IMR-90 (cell line): ENCODE measurements at regions of chr6 and their contacts with region 1.

Region 1: DNA sequence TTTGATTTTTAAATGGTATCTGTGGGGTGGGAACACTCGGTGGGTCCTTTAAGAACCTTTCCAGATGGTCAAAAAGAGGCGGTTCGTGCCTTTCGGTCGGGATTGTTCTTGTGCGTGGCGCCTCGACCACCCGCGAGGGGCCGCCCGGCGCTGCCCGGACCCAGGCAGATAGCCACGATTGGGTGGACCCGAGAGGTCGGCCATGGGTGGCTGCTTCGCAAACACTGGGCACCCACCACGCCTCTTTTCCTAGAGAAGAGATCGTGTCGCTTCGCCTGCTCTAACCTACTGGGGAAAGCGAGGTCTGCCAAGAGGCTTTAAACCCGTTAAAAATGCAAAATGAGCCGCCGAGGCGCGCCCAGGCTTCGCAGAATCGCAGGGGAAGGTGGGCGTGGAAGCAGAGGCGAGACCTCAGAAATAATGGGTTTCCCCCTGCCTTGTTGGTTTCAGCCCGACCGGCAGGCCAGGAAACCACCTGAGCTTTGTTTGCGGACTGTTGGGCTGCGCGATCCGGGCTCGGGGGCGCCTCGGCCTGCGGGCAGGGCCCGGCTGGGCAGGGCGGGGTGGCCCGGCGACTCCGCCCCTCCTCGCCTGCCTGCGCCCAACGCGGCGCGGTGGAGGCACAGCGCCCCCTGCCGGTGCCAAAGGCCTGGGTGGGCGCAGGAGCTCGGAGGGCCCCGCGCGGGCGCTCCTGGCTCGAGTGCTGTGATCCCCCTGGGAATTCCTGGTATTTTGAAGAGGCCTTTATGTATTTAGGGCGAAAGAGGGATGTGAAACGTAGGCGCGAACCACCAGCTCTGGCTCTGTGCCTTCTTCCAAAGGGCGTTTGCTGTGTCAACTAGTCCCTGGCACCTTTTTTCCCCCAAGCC is 1.6 kb downstream of the MARCKS start:
- DNase-seq: peak; percentile 87
- ATAC-seq: peak; percentile 69
- H3K4me3 ChIP-seq: peak overlapping the region; percentile 95
- H3K27ac ChIP-seq: peak overlapping the region; percentile 96
- H3K4me1 ChIP-seq: no peaks in the 10 kb centered on the region
- H3K27me3 ChIP-seq: no peaks in the 10 kb centered on the region
- CTCF ChIP-seq: peak; percentile 96
- POLR2A ChIP-seq: peak; percentile 71; the same call in 1 of the 2 replicates
- RAD21 ChIP-seq: peak; percentile 95

Region 2: GRCh38 chr6:112649853-112650252 is 1208.9 kb before region 1 on chr6:
- CTCF ChIA-PET with region 1: no interaction called
- POLR2A ChIA-PET with region 1: no interaction called
- dilution Hi-C with region 1: no loop called
- in situ Hi-C with region 1: no loop called
- intact Hi-C with region 1: no loop called
- DNase-seq: no peak
- ATAC-seq: no peak
- H3K4me3 ChIP-seq: no peak overlapping the region
- H3K27ac ChIP-seq: no peak overlapping the region
- H3K4me1 ChIP-seq: no peaks in the 10 kb centered on the region
- H3K27me3 ChIP-seq: no peaks in the 10 kb centered on the region
- CTCF ChIP-seq: no peak
- POLR2A ChIP-seq: no peak
- RAD21 ChIP-seq: no peak

Region 3: GRCh38 chr6:112879920-112880413 is 978.7 kb before region 1 on chr6:
- CTCF ChIA-PET with region 1: interaction called, 4 read pairs
- POLR2A ChIA-PET with region 1: no interaction called
- dilution Hi-C with region 1: no loop called
- in situ Hi-C with region 1: no loop called
- intact Hi-C with region 1: loop called (anchors 2 kb)
- DNase-seq: no peak
- ATAC-seq: no peak
- H3K4me3 ChIP-seq: no peak overlapping the region
- H3K27ac ChIP-seq: no peak overlapping the region
- H3K4me1 ChIP-seq: peaks cover 11% of the 10 kb centered on the region
- H3K27me3 ChIP-seq: no peaks in the 10 kb centered on the region
- CTCF ChIP-seq: no peak
- POLR2A ChIP-seq: no peak
- RAD21 ChIP-seq: no peak

Region 4: DNA sequence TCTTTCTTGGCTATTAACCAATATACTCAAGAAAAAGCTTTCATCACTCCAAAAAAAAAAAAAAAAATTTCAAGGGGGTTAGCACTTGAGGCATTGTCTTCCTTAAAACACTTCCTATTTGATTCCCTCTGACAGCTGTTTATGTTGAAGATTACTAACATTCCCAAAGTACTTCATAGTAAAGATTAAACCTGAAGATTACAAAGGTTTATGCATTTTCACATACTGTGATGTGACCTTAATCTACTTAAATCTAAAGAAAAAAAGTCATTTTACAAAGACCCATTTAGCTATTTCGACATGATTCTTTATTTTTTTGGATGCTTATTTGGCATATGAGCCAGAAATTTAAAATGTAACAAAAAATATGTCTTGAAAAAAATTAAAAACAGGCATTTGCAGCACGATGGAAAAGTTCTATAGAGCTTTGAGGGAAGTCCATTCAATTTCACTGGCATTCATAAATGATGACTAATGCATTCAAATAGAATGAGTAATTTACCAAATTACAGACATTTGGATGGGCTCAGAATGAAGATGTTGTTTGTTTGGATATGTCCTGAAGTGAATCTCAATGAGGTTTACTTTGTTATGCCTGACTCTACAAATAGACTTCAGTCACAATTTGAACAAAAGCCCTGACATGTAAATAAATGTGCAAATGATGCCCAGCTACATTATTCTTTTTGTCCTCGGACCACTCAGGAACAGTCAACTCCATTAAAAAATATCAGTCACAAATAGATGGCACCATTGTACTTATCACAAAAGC is 676.2 kb before region 1 on chr6:
- CTCF ChIA-PET with region 1: interaction called, 8 read pairs
- POLR2A ChIA-PET with region 1: interaction called, 7 read pairs
- dilution Hi-C with region 1: no loop called
- in situ Hi-C with region 1: no loop called
- intact Hi-C with region 1: loop called (anchors 2 kb)
- DNase-seq: peak; percentile 83
- ATAC-seq: peak; percentile 47
- H3K4me3 ChIP-seq: no peak overlapping the region
- H3K27ac ChIP-seq: no peak overlapping the region; the same call in 1 of the 2 replicates
- H3K4me1 ChIP-seq: peaks cover 13% of the 10 kb centered on the region
- H3K27me3 ChIP-seq: no peaks in the 10 kb centered on the region
- CTCF ChIP-seq: no peak
- POLR2A ChIP-seq: no peak
- RAD21 ChIP-seq: no peak

Region 5: DNA sequence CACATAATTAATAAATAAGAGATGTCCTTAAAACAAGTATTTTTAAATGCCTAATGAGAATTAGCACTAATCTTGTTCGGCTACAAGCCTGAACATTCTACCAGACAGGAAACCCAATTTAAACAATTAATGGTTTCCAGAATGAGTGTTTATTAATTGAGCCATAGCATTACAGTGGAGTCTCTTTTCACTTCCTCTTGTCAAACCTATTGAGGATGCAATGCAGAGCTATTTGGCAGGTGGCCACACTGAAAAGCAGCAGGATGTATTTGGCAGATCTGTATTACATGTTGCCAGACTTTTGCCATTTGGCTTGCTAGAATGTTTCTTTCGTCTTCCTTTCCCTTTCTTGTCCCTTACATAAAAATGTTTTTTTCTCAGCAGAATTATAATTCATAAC is 476.8 kb before region 1 on chr6:
- CTCF ChIA-PET with region 1: no interaction called
- POLR2A ChIA-PET with region 1: no interaction called
- dilution Hi-C with region 1: no loop called
- in situ Hi-C with region 1: no loop called
- intact Hi-C with region 1: loop called (anchors 2 kb)
- DNase-seq: peak; percentile 75
- ATAC-seq: no peak
- H3K4me3 ChIP-seq: no peak overlapping the region
- H3K27ac ChIP-seq: no peak overlapping the region; the same call in 1 of the 2 replicates
- H3K4me1 ChIP-seq: peaks cover 9% of the 10 kb centered on the region
- H3K27me3 ChIP-seq: no peaks in the 10 kb centered on the region
- CTCF ChIP-seq: no peak
- POLR2A ChIP-seq: no peak
- RAD21 ChIP-seq: no peak

Region 6: DNA sequence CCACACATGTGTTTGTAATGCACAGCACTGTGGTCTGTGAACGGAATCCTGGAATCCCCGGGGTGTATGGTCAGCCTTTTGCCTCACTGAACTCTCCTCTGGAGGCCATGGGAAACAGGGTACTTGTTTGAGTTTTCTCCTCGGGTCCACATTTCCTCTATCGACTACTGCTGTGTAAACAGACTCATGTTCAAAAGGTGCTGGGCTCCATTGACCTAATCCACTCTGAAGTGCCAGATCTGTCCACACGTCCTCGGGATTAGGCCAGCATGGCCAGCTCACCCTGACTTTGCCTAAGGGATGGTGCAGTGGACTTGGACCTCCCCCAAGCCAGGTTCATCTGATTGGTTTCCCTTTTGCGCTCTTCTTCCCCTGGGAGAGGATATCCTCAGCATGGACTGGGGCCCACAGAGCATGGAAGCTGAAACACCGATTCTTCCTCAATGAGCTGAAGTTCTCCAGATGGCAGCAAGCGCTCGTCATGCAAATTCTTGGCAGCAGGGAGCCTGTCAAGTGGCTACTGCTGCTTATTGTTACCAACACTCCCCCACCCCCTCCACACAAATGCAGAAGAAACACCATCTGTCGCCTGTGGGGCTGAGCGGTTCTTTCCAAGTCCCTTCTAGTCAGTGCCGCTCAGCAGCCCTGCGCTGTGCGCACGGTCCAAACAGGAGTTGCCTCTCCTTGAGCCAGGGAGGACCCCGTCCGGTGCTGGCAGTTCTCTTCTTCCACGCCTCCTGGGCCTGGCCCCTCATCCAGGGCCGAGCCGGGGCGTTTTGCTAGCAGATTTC is 294.1 kb before region 1 on chr6:
- CTCF ChIA-PET with region 1: no interaction called
- POLR2A ChIA-PET with region 1: no interaction called
- dilution Hi-C with region 1: no loop called
- in situ Hi-C with region 1: no loop called
- intact Hi-C with region 1: loop called (anchors 1 kb)
- DNase-seq: peak; percentile 92
- ATAC-seq: peak; percentile 83
- H3K4me3 ChIP-seq: 0 out of 2 replicates have a peak overlapping the region, but pooled peaks have one; percentile 0
- H3K27ac ChIP-seq: peak overlapping the region; percentile 74
- H3K4me1 ChIP-seq: peaks cover 4% of the 10 kb centered on the region
- H3K27me3 ChIP-seq: no peaks in the 10 kb centered on the region
- CTCF ChIP-seq: no peak
- POLR2A ChIP-seq: no peak
- RAD21 ChIP-seq: no peak; the same call in 1 of the 2 replicates

Region 7: DNA sequence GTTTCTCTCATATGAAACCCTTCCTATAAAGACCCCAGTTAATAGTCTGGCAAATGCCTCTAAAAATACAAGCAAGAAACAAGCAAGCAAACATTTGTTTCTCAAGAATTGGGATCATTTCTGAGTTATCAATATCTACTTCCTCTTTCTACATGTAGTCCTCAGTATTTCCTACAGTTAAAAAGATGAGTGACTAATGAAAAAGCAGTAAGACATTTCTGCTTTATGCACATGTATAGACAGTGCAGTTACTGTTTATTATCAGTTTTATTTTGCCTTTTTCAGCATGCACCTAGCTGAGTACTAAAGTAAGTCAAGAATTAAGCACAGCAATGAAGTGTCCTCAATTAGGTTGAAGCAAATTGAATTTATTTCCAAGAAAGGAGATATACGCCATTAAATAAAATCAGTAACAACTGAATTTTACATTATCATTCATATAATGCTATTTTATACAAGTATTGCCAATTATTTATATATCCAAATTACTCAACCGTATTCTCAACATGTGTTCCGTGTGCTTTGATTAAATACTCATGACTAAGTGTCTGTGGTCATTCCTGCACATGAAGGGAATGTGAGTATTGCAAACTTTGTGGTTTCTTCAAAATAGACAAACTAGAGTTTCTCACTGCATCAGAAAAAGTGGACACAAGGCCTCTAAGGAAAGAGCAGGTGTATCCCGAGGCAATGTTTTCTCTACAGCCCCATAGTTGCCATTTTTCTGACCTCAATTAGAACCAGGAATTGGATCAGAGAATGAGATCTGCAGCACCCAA is 160.9 kb before region 1 on chr6:
- CTCF ChIA-PET with region 1: no interaction called
- POLR2A ChIA-PET with region 1: interaction called, 4 read pairs
- dilution Hi-C with region 1: no loop called
- in situ Hi-C with region 1: no loop called
- intact Hi-C with region 1: loop called (anchors 1 kb)
- DNase-seq: peak; percentile 98
- ATAC-seq: peak; percentile 88
- H3K4me3 ChIP-seq: no peak overlapping the region
- H3K27ac ChIP-seq: no peak overlapping the region
- H3K4me1 ChIP-seq: peaks cover 6% of the 10 kb centered on the region; the same call in 1 of the 2 replicates
- H3K27me3 ChIP-seq: peaks cover 32% of the 10 kb centered on the region
- CTCF ChIP-seq: no peak
- POLR2A ChIP-seq: no peak
- RAD21 ChIP-seq: no peak